Right ventricle myocardium inferior (tissue), 1 donor: ENCODE measurements at regions of chr1 and their contacts with region 1.

Region 1: DNA sequence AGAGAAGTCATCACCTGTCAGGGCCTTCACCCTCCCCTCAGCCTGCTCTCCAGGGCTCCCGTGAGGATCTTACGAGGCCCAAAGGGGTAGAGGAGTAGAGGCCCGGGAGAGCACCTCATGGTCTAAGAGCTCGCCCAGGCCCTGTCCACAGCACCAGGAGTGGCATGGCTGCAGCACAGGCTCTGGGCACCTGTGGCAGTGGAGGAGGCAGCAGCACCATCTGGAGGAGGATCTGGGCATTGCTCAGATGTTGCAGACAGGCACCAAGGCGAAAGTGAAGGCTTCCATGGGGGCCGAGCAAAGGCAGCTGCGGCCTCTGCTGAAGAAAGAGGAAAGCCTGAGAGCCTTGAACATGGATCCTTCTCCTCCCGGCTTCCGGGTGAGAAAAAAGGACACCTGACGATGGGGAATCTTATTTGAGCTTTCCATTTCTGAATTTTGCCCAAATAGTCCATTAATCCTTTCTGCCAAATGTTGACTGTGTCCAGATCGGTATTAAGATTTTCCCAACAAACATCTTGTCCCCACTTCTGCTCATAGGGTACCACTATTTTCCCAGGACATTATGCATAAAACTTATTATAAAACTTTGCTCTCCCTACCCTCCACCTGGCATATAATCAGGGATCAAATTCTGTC is 604.7 kb downstream of the PTPRC start:
- DNase-seq: peak; percentile 72
- ATAC-seq: peak; percentile 68

Region 2: GRCh38 chr1:198880818-198881597 is 362.5 kb before region 1 on chr1:
- intact Hi-C with region 1: loop called (anchors 10 kb)
- DNase-seq: no peak
- ATAC-seq: no peak

Region 3: DNA sequence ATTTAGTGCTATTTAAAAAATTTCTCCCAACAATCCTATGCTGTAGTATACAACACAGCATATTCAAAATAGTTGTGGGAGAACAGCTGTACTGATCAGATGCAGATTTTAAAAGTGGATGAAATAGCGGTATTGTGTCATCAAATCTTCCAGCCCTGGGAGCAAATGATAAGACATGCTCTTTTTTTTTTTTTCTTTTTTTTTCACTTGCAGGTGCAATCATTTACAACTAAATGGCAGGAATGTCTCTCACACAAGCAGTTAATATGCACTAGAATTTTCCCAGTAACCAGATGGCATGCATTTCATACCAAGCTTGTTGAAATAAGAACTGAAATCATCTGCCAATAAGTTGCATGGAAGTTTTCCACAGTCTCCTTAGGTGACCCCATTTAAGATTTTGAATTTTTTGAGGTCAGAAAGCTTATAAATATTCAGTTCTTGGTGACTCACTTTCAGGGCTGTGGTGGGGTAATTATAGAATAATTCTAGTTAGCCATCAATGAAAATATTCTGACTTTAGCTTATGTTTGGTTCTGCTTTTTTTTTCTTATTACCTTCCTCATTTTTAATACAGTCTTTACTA is 160.1 kb after region 1 on chr1:
- intact Hi-C with region 1: no loop called
- DNase-seq: no peak
- ATAC-seq: no peak

Region 4: GRCh38 chr1:199832451-199832850 is 588.9 kb after region 1 on chr1:
- intact Hi-C with region 1: no loop called
- DNase-seq: no peak
- ATAC-seq: no peak